ENCODE measurements at regions of chr1 and their contacts with region 1.

Region 1: DNA sequence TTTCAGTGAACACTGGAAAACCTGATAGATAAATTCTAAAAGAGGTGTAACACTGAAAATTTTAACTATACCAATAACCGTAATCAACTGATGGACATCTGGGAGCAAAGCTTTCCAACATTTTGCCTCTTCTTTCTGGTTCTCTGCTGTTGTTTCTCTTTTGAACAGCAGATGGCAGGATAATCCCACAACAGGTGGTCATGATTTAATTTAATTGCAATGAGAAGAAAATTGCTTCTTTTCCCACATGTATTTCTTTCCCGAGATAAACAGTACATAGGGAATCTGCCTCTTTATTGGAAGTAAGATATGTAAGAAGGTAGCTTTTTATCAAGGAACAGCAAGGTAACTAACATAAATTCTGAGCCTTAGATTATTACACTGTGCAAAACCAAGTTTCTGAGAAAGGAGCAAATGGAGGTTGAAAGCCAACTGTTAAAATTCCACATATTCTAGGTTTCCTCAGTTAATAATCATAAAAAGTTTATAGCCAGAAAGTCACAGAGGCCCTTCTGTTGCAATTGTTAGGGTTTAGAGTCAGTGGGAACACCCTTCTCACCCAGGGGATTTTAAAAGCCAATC is 72.9 kb downstream of the RPS6KA1 start:
- DNase-seq: peak; percentile 61
- ATAC-seq: no peak
- H3K4me3 ChIP-seq: no peak overlapping the region
- H3K27ac ChIP-seq: no peak overlapping the region; the same call in 1 of the 2 replicates
- H3K4me1 ChIP-seq: peaks cover 7% of the 10 kb centered on the region; the same call in 1 of the 2 replicates
- H3K27me3 ChIP-seq: no peaks in the 10 kb centered on the region
- CTCF ChIP-seq: peak; percentile 79; the same call in 1 of the 2 replicates

Region 2: DNA sequence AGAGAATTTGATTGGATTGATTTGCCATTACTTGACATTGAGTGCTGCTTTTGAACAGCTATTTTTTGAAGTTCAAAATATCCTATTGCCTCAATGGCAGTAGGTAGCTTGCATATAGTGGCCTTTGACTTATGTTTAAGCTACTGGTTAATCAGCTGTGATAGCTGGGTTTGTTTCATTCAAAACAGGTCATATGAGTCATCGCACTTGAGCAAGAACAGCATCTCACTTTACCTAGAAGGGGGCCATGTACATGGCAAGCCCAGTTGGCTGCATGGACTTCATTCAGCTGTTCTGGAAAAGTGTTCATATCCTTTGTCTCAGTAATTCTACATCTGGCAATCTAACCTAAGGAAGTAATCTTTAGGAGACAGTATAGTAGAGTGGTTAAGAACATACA is 64.4 kb after region 1 on chr1:
- CTCF ChIA-PET with region 1: no interaction called
- POLR2A ChIA-PET with region 1: interaction called, 10 read pairs
- in situ Hi-C with region 1: no loop called
- intact Hi-C with region 1: no loop called
- DNase-seq: no peak
- ATAC-seq: no peak
- H3K4me3 ChIP-seq: no peak overlapping the region
- H3K27ac ChIP-seq: no peak overlapping the region
- H3K4me1 ChIP-seq: no peaks in the 10 kb centered on the region
- H3K27me3 ChIP-seq: no peaks in the 10 kb centered on the region
- CTCF ChIP-seq: no peak

Region 3: GRCh38 chr1:26677306-26678115 is 75.0 kb after region 1 on chr1:
- CTCF ChIA-PET with region 1: interaction called, 11 read pairs
- POLR2A ChIA-PET with region 1: interaction called, 3 read pairs
- in situ Hi-C with region 1: no loop called
- intact Hi-C with region 1: no loop called
- DNase-seq: peak; percentile 95
- ATAC-seq: peak; percentile 99
- H3K4me3 ChIP-seq: peak overlapping the region in 1 of 2 experiments; percentile 33; a peak in 2 of 4 replicates
- H3K27ac ChIP-seq: peak overlapping the region; percentile 68
- H3K4me1 ChIP-seq: peaks cover 12% of the 10 kb centered on the region
- H3K27me3 ChIP-seq: no peaks in the 10 kb centered on the region
- CTCF ChIP-seq: peak; percentile 92

Region 4: GRCh38 chr1:26686795-26687194 is 84.3 kb after region 1 on chr1:
- CTCF ChIA-PET with region 1: interaction called, 10 read pairs
- POLR2A ChIA-PET with region 1: no interaction called
- in situ Hi-C with region 1: no loop called
- intact Hi-C with region 1: no loop called
- DNase-seq: no peak
- ATAC-seq: peak; percentile 36; the same call in 1 of the 2 replicates
- H3K4me3 ChIP-seq: no peak overlapping the region
- H3K27ac ChIP-seq: peak overlapping the region; percentile 6; the same call in 1 of the 2 replicates
- H3K4me1 ChIP-seq: peaks cover 17% of the 10 kb centered on the region
- H3K27me3 ChIP-seq: no peaks in the 10 kb centered on the region
- CTCF ChIP-seq: no peak

Region 5: GRCh38 chr1:26787706-26788514 is 185.4 kb after region 1 on chr1 and contains the start of gene PIGV:
- CTCF ChIA-PET with region 1: interaction called, 24 read pairs
- POLR2A ChIA-PET with region 1: interaction called, 7 read pairs
- in situ Hi-C with region 1: loop called (anchors 5 kb)
- intact Hi-C with region 1: loop called (anchors 2 kb)
- DNase-seq: no peak
- ATAC-seq: peak; percentile 88
- H3K4me3 ChIP-seq: peak within 1 kb of the TSS; percentile 63 to 71
- H3K27ac ChIP-seq: peak within 1 kb of the TSS; percentile 100
- H3K4me1 ChIP-seq: peaks cover 64% of the 10 kb centered on the region
- H3K27me3 ChIP-seq: no peaks in the 10 kb centered on the region
- CTCF ChIP-seq: no peak
- total RNA-seq, gene PIGV: 20.1 TPM

Region 6: DNA sequence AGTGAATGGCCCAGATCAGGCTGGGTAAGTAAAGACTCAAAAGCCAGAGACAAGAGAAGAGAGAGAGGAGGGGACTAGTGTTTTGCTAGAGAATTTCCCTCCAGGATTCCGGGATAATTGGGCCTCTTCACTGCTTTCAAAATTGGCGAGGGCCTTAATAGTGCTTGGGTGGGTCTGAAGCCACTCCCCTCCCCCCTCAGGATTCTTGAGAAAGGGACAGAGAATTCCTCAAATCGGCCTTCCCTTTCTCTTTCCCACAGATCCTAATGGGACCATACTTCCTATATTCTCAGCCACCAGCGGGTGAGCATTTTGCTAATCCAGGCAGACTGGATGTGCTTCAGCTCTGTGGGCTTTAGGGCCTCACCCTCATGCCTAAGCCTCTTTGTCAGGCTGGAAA is 272.4 kb after region 1 on chr1:
- CTCF ChIA-PET with region 1: interaction called, 11 read pairs
- POLR2A ChIA-PET with region 1: no interaction called
- in situ Hi-C with region 1: no loop called
- intact Hi-C with region 1: loop called (anchors 5 kb)
- DNase-seq: no peak
- ATAC-seq: no peak
- H3K4me3 ChIP-seq: no peak overlapping the region
- H3K27ac ChIP-seq: no peak overlapping the region
- H3K4me1 ChIP-seq: no peaks in the 10 kb centered on the region
- H3K27me3 ChIP-seq: no peaks in the 10 kb centered on the region
- CTCF ChIP-seq: no peak

Measured in Panc1 (cell line).